Activated CD8-positive, alpha-beta memory T cell treated with anti-CD3 and anti-CD28 coated beads, Interleukin-2, amount 10 ng/mL, durations not matched to agents 7 days and 5 days (primary cell): ENCODE measurements at regions of chr22 and their contacts with region 1.

Region 1: GRCh38 chr22:36221799-36222751 is 17.3 kb downstream of the APOL2 start:
- DNase-seq: peak; percentile 68
- ATAC-seq: peak; percentile 91
- H3K4me3 Mint-ChIP-seq: peak overlapping the region; percentile 29
- H3K27ac Mint-ChIP-seq: no peak overlapping the region
- H3K4me1 Mint-ChIP-seq: peaks cover 10% of the 10 kb centered on the region
- H3K27me3 Mint-ChIP-seq: peaks cover 33% of the 10 kb centered on the region

Region 2: DNA sequence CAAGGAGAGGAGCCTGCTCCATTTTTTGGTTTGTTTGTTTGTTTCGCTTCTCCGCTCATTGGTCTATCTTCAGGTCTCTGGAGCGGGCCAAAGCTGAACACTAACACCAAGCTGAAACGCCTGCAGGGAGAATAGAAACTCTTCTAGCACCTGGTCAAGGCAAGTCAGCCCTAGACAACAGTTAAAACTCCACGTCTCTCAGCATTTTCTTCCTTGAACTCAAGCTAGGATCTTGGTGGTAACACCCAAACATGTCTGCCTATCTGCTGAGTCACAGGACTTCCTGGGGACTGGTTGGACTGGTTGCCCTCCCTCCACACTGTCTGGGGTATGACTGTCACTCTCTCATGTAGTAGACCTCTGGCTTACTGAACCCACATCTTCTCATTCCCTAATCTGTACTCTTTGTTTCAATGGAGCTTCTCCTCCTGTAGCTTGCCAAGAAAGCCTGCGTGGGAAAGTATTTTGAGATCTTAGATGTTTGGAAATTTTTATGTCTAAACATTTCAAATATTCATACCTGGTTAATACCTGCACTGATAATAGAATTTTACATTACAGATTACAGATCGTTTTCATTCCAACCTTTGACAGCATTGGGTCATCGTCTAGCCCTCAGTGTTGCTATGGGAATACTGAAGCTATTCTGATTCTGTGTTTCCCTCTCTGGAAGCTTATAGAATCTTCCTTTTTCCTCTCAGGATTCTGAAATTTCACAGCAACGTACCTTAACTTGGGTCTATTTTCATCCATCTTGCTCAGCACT is 169.4 kb before region 1 on chr22:
- CTCF ChIA-PET with region 1: no interaction called
- DNase-seq: peak; percentile 52
- ATAC-seq: peak; percentile 76
- H3K4me3 Mint-ChIP-seq: no peak overlapping the region
- H3K27ac Mint-ChIP-seq: no peak overlapping the region
- H3K4me1 Mint-ChIP-seq: peaks cover 11% of the 10 kb centered on the region
- H3K27me3 Mint-ChIP-seq: peaks cover 10% of the 10 kb centered on the region

Region 3: DNA sequence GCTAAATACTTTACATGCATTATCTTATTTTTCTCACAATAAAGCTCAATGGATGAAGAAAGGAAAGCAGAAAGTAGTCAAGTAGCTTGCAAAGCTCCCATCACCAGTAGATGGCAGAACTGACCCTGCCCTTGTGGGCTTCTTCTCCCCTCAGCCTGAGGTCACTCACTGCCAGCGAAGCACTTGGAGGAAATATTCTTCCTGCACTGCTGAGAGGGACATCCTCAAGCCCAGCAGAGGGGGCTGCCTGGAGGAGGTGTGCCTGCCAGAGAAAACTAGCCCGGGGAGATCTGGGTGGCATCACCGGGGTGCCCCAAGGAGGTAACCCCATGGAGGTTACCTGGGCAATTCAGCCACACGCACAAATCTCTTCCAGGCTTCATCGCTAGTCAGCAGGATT is 27.1 kb before region 1 on chr22:
- CTCF ChIA-PET with region 1: interaction called, 54 read pairs
- DNase-seq: peak; percentile 75
- ATAC-seq: peak; percentile 65
- H3K4me3 Mint-ChIP-seq: no peak overlapping the region
- H3K27ac Mint-ChIP-seq: no peak overlapping the region
- H3K4me1 Mint-ChIP-seq: peaks cover 47% of the 10 kb centered on the region
- H3K27me3 Mint-ChIP-seq: peaks cover 2% of the 10 kb centered on the region

Region 4: DNA sequence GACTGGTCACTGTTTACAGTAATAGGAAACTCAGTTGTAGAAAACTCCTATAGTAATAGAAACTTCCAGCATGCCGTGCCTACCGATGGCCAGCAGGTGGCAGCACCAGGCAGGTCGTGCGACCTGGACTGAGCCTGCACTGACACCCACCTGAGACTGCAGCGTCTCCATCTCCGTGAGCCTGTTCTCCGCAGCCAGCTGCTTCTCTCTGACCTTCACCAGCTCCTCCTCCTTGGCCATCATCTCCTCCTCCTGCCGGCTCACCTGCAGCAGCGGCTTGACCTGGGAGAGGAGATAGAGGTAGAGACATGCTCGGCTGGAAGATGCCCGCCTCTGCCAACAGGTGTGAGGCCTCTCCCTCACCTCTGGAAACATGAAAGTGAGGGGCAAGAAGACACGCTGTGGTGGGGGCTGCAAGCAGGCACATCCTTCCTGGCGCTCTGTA is 79.3 kb after region 1 on chr22:
- CTCF ChIA-PET with region 1: no interaction called
- DNase-seq: peak; percentile 86
- ATAC-seq: peak; percentile 86
- H3K4me3 Mint-ChIP-seq: no peak overlapping the region
- H3K27ac Mint-ChIP-seq: peak overlapping the region; percentile 71
- H3K4me1 Mint-ChIP-seq: peaks cover 9% of the 10 kb centered on the region
- H3K27me3 Mint-ChIP-seq: no peaks in the 10 kb centered on the region